Calu3 (cell line): ENCODE measurements at regions of chr5 and their contacts with region 1.

Region 1: DNA sequence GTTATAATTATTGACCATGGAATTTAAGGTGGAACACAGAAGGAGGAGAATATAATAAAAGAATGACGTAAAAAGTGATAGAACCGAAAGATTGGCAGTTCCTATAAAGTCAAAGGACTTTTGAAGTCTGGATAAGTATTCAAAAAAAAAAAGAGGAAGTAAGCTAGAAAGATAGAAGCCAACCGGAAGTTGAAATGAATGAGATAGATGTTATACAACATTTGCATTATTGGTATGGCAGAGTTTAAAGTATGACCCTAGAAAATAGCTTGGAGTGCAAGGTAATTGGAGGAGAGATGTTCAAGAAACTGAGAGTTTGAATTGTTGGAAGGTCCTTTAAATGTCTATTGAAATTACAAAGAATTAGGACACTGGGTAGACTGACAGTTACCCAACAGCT is 293.6 kb downstream of the FER start:
- DNase-seq: no peak
- H3K4me3 Mint-ChIP-seq: no peak overlapping the region
- H3K27ac Mint-ChIP-seq: no peak overlapping the region
- H3K4me1 Mint-ChIP-seq: no peaks in the 10 kb centered on the region
- H3K27me3 Mint-ChIP-seq: no peaks in the 10 kb centered on the region
- CTCF ChIP-seq: no peak

Region 2: DNA sequence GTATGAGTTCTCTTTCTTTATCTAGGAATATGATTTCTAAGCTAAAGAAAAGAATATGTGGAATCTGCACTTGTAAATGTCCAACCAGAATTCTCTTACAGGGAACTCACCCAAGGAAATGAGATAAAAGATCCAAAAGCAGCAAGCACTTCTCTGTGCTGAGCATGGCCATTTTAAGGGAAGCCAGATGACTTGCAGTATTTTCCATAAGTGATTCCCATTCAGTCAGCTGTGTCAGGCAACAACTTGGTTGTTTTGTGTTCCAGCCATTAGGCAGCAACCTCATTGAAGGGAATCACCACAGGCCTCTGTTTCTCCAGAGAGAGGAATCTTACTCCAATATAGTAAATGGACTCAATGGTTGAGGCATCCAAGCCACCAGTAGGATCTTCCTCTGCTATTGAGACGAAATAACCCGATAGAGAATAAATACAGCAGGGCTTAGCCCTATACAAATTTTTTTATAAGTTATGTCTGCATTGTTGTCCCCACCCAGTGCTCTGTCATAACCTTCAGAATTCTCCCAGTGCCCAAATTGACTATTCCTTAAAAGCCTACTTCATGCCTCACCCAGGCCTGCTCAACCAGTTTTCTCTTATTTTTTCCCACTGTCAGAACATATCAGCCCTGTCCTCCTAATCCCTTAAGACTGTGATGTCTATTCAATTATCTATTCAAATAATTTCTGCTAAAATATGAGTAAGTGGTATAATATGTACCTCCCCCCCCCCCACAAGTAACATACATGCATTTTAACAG is 131.9 kb after region 1 on chr5:
- CTCF ChIA-PET with region 1: interaction called, 13 read pairs
- intact Hi-C with region 1: no loop called
- DNase-seq: no peak
- H3K4me3 Mint-ChIP-seq: no peak overlapping the region
- H3K27ac Mint-ChIP-seq: no peak overlapping the region
- H3K4me1 Mint-ChIP-seq: no peaks in the 10 kb centered on the region
- H3K27me3 Mint-ChIP-seq: no peaks in the 10 kb centered on the region
- CTCF ChIP-seq: no peak